MCF 10A (cell line): ENCODE measurements at regions of chr3 and their contacts with region 1.

Region 1: DNA sequence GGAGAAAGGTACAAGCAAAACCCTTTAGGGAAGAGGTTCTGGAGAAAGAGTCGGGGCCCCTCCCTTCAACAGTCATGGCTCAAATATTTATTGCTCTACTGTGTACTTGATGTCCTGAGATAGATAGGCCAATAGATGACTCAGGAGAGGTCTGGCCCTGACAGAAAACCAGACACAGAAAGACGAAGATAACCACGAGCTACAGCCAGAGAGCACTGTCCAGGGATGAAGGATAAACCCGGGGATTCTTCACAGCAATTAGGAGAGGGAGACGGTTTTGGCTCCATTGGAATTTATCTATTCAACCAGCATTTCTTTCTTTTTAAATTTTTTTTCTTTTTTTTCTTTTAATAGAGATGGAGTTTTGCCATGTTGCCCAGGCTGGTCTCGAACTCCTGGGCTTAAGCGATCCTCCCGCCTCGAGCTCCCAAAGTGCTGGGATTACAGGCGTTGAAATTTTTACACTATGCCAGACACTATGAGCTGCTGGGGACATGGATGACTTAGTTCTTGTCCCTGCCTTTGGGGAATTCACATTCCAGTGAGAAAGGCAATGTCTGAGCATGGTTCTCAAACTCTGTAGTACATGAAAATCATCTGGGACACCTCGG is 4.6 kb upstream of the CIDEC start:
- DNase-seq: peak; percentile 90
- H3K4me3 Mint-ChIP-seq: peak overlapping the region; percentile 53
- H3K27ac Mint-ChIP-seq: peak overlapping the region; percentile 98
- H3K4me1 Mint-ChIP-seq: peaks cover 24% of the 10 kb centered on the region
- H3K27me3 Mint-ChIP-seq: no peaks in the 10 kb centered on the region
- CTCF ChIP-seq: no peak

Region 2: GRCh38 chr3:9852549-9852948 is 32.1 kb before region 1 on chr3:
- CTCF ChIA-PET with region 1: interaction called, 16 read pairs
- POLR2A ChIA-PET with region 1: interaction called, 21 read pairs
- intact Hi-C with region 1: no loop called
- DNase-seq: no peak
- H3K4me3 Mint-ChIP-seq: no peak overlapping the region
- H3K27ac Mint-ChIP-seq: peak overlapping the region; percentile 49
- H3K4me1 Mint-ChIP-seq: peaks cover 35% of the 10 kb centered on the region
- H3K27me3 Mint-ChIP-seq: no peaks in the 10 kb centered on the region
- CTCF ChIP-seq: no peak

Region 3: GRCh38 chr3:9862391-9863057 is 22.1 kb before region 1 on chr3:
- CTCF ChIA-PET with region 1: interaction called, 9 read pairs
- POLR2A ChIA-PET with region 1: interaction called, 70 read pairs
- intact Hi-C with region 1: no loop called
- DNase-seq: no peak
- H3K4me3 Mint-ChIP-seq: no peak overlapping the region
- H3K27ac Mint-ChIP-seq: peak overlapping the region; percentile 59
- H3K4me1 Mint-ChIP-seq: peaks cover 16% of the 10 kb centered on the region
- H3K27me3 Mint-ChIP-seq: no peaks in the 10 kb centered on the region
- CTCF ChIP-seq: no peak

Region 4: DNA sequence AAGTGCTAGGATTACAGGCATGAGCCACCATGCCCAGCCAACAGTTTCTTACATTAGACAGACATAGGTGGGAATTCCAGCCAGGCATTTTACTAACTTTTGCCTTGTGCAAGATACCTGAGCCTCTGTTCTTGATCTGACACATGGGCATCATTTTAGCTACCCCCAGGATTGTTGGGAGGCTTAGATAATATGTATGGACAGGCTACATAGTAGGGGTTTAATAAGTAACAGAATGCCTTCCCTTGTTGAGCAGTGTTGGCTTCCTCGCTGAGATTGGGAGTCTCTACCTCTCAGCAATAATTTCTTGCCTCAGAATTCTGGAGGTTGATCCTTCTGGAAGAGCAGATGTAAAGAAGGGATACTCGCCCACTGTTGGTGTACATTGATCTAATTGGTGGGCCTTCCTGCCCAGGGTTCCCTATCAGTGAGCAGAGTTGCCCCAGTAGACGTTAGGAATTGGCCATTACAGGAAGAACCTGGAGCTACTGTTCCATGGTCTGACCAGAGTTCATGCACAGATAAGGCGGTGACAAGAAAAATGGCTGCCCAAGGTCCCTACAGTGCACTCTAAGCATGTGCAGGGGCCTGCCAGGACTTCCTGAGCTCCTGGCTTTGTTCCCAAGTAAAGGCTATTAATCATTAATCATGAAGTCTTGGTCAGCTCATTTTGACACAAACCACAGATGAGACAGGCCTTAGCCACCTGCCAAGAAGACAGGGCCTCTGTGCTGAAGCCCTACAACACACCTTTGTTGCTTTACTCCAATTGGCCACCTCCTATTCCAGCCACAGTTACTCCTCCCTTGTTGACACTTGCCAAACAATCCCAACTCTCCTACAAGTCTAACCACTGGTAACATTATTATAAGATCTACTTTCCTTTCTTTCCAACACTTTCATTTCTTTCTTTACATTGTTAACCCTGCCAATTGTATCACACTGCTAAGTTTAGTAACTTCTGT is 13.0 kb after region 1 on chr3:
- CTCF ChIA-PET with region 1: interaction called, 11 read pairs
- POLR2A ChIA-PET with region 1: interaction called, 70 read pairs
- intact Hi-C with region 1: no loop called
- DNase-seq: peak; percentile 96
- H3K4me3 Mint-ChIP-seq: peak overlapping the region; percentile 33
- H3K27ac Mint-ChIP-seq: peak overlapping the region; percentile 79
- H3K4me1 Mint-ChIP-seq: peaks cover 59% of the 10 kb centered on the region
- H3K27me3 Mint-ChIP-seq: no peaks in the 10 kb centered on the region
- CTCF ChIP-seq: no peak

Region 5: DNA sequence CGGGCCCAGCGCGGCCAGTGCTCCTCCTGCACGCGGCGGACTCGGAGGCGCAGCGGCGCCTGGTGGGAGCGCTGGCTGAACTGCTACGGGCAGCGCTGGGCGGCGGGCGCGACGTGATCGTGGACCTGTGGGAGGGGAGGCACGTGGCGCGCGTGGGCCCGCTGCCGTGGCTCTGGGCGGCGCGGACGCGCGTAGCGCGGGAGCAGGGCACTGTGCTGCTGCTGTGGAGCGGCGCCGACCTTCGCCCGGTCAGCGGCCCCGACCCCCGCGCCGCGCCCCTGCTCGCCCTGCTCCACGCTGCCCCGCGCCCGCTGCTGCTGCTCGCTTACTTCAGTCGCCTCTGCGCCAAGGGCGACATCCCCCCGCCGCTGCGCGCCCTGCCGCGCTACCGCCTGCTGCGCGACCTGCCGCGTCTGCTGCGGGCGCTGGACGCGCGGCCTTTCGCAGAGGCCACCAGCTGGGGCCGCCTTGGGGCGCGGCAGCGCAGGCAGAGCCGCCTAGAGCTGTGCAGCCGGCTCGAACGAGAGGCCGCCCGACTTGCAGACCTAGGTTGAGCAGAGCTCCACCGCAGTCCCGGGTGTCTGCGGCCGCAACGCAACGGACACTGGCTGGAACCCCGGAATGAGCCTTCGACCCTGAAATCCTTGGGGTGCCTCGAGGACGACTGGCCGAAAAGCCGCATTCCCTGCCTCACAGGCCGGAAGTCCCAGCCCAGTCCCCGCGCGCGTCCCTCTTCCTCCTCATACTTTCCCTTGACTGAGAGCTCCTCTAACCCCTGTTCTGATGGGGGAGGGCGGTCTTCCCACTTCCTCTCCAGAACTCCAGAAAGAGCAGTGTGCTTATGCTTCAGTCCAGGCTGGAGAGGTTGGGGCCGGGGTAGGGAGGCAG is 30.8 kb after region 1 on chr3:
- CTCF ChIA-PET with region 1: interaction called, 16 read pairs
- POLR2A ChIA-PET with region 1: interaction called, 47 read pairs
- intact Hi-C with region 1: no loop called
- DNase-seq: no peak
- H3K4me3 Mint-ChIP-seq: no peak overlapping the region
- H3K27ac Mint-ChIP-seq: no peak overlapping the region
- H3K4me1 Mint-ChIP-seq: peaks cover 21% of the 10 kb centered on the region
- H3K27me3 Mint-ChIP-seq: no peaks in the 10 kb centered on the region
- CTCF ChIP-seq: no peak

Region 6: GRCh38 chr3:9932843-9933560 is 48.3 kb after region 1 on chr3:
- CTCF ChIA-PET with region 1: interaction called, 4 read pairs
- POLR2A ChIA-PET with region 1: interaction called, 15 read pairs
- intact Hi-C with region 1: no loop called
- DNase-seq: peak; percentile 77
- H3K4me3 Mint-ChIP-seq: peak overlapping the region; percentile 90
- H3K27ac Mint-ChIP-seq: peak overlapping the region; percentile 86
- H3K4me1 Mint-ChIP-seq: peaks cover 23% of the 10 kb centered on the region
- H3K27me3 Mint-ChIP-seq: no peaks in the 10 kb centered on the region
- CTCF ChIP-seq: peak; percentile 59